ENCODE measurements at regions of chr15 and their contacts with region 1.

Region 1: DNA sequence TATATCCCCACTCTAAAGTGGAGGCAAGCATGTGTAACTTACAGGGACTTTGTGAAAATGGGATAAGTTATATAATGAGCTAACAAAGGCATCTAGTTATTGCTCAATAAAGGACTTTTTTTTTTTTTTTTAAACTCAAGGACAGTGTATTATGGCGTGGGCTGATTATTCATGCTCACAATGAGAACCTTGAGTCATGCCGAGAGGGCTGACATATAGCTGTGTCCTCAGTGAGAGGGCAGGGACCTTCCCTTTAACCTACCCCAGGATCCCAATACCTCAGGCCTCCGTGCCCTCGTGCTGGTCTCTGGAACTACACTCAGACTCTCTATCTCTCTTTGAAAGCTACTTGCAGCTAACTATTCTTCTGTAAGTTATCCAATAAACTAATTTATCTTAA is 319.9 kb upstream of the ICE2 start:
- DNase-seq: peak; percentile 81
- ATAC-seq: peak; percentile 80
- H3K4me3 Mint-ChIP-seq: no peak overlapping the region
- H3K27ac Mint-ChIP-seq: peak overlapping the region; percentile 95
- H3K4me1 Mint-ChIP-seq: peaks cover 85% of the 10 kb centered on the region
- H3K27me3 Mint-ChIP-seq: no peaks in the 10 kb centered on the region

Region 2: GRCh38 chr15:60649845-60650548 is 148.8 kb before region 1 on chr15:
- CTCF ChIA-PET with region 1: interaction called, 3 read pairs
- POLR2A ChIA-PET with region 1: interaction called, 8 read pairs
- intact Hi-C with region 1: loop called (anchors 2 kb)
- DNase-seq: peak; percentile 68
- ATAC-seq: peak; percentile 89
- H3K4me3 Mint-ChIP-seq: peak overlapping the region; percentile 27
- H3K27ac Mint-ChIP-seq: peak overlapping the region; percentile 82
- H3K4me1 Mint-ChIP-seq: peaks cover 47% of the 10 kb centered on the region
- H3K27me3 Mint-ChIP-seq: no peaks in the 10 kb centered on the region

Region 3: DNA sequence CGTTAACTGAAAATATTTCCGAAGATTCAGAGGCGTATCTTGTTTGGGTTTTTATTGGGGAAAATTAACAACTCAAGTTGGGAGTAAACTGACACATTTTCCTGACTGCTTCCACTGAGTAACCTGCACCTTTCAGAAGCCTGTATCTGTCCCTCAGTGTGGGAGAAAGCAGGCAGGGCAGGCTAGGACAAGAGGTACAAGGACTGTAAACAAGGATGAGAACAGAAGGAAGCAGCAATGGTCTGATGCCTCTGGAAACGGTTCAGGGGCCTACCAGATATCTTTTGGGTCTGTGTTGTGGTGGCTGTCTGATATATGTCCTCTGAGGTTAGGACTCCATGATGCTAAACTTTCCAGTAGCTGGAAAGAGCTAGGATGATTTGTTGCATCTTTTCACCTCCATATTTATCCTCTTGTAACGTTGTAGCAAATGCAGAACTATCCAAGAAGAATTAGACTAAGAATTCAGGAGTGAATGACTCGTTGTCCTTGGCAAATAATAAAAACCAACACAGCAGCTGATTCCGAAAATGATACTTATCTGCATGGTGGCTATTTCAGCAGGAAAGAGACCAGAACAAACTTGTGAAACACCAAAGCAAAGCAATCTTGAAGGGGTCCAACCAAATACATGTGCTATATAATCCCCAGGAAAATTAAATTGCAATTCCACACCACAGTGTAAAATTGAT is 124.0 kb before region 1 on chr15:
- CTCF ChIA-PET with region 1: no interaction called
- POLR2A ChIA-PET with region 1: no interaction called
- intact Hi-C with region 1: no loop called
- DNase-seq: no peak
- ATAC-seq: no peak
- H3K4me3 Mint-ChIP-seq: no peak overlapping the region
- H3K27ac Mint-ChIP-seq: no peak overlapping the region
- H3K4me1 Mint-ChIP-seq: peaks cover 31% of the 10 kb centered on the region
- H3K27me3 Mint-ChIP-seq: no peaks in the 10 kb centered on the region

Region 4: DNA sequence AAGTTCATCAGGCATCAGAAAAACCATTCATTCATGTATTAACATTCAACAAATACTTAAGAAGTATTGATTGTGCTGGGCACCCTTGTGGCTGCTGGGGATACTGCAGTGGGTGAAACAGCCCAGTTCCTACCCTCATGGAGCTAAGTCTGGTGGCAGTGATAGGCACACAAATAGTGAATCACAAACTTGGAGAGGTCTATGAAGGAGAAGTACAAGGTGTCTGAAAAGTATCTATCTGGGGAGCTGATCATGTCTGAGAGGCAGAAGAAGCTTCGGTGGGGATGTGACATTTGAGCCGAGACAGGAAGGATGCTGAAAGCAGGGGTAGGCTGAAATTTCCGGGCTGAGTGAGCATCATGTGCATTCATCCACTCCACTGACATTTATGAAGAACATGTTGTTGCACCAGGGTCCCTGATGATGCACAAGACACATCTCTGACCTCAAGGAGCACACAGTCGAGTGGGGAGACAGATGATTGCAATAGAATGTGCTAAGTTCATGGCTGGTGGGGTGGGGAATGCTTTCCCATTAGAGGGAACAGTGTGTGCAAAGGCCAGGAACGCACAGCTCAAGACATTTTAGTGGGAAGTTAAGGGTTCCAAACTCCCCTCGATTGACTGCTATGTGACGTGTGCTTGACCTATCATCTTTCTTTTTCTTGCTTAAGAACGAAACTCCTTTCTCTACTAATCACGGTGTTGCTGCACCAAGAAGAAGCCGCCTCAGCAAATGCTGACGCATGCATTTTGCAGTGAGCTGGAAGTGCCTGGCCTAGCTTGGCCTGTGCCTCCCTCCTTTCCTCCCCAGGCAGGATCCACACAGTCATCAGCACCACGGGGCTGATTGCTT is 10.8 kb before region 1 on chr15:
- CTCF ChIA-PET with region 1: interaction called, 26 read pairs
- POLR2A ChIA-PET with region 1: interaction called, 6 read pairs
- intact Hi-C with region 1: no loop called
- DNase-seq: peak; percentile 70
- ATAC-seq: peak; percentile 81
- H3K4me3 Mint-ChIP-seq: peak overlapping the region; percentile 5
- H3K27ac Mint-ChIP-seq: peak overlapping the region; percentile 52
- H3K4me1 Mint-ChIP-seq: peaks cover 59% of the 10 kb centered on the region
- H3K27me3 Mint-ChIP-seq: no peaks in the 10 kb centered on the region

Region 5: GRCh38 chr15:60840306-60840702 is 41.5 kb after region 1 on chr15:
- CTCF ChIA-PET with region 1: interaction called, 5 read pairs
- POLR2A ChIA-PET with region 1: interaction called, 3 read pairs
- intact Hi-C with region 1: loop called (anchors 1 to 2 kb)
- DNase-seq: peak; percentile 34
- ATAC-seq: peak; percentile 5
- H3K4me3 Mint-ChIP-seq: peak overlapping the region; percentile 60
- H3K27ac Mint-ChIP-seq: peak overlapping the region; percentile 62
- H3K4me1 Mint-ChIP-seq: peaks cover 77% of the 10 kb centered on the region
- H3K27me3 Mint-ChIP-seq: peaks cover 2% of the 10 kb centered on the region

Region 6: DNA sequence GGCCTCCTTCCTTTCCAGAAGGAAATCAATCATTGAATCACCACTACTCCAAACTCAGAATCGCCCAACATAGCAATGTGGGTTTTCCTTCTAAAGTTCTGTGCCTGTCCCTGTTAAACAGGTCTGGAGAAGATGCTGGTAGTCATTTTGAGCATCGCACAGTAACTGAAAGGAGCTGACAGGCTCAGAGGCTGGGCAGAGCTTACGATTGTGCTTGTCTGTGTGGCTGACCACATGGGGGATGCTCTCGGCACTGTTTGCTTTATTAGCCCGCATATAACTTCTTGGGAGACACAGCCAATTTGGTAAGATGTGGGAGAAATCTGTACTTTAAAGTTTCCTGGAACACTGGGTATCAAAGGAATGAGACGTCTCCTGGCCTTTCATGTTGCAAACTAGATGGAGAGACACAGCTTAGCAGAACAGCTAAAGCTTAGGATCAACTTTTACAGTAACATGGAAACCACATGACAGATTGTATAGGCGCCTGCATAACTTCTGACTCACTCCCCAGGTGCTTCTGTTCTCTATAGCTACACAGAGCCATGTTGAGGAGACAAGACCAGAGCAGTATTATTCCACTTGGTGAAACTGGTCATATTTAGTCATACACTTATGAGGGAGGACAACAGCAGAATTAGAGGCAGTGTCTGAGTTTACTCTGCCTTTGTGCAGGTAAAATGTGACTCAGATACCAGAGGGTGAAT is 56.2 kb after region 1 on chr15:
- CTCF ChIA-PET with region 1: no interaction called
- POLR2A ChIA-PET with region 1: no interaction called
- intact Hi-C with region 1: loop called in 1 of 2 experiments (anchors 2 kb)
- DNase-seq: peak; percentile 48
- ATAC-seq: peak; percentile 99
- H3K4me3 Mint-ChIP-seq: no peak overlapping the region
- H3K27ac Mint-ChIP-seq: peak overlapping the region; percentile 33
- H3K4me1 Mint-ChIP-seq: peaks cover 64% of the 10 kb centered on the region
- H3K27me3 Mint-ChIP-seq: peaks cover 3% of the 10 kb centered on the region

Region 7: GRCh38 chr15:61003403-61004294 is 204.8 kb after region 1 on chr15:
- CTCF ChIA-PET with region 1: no interaction called
- POLR2A ChIA-PET with region 1: no interaction called
- intact Hi-C with region 1: no loop called
- DNase-seq: no peak
- ATAC-seq: no peak
- H3K4me3 Mint-ChIP-seq: no peak overlapping the region
- H3K27ac Mint-ChIP-seq: no peak overlapping the region
- H3K4me1 Mint-ChIP-seq: no peaks in the 10 kb centered on the region
- H3K27me3 Mint-ChIP-seq: peaks cover 17% of the 10 kb centered on the region

Measured in activated CD4-positive, alpha-beta T cell treated with anti-CD3 and anti-CD28 coated beads for 36 hours (primary cell).